Astrocyte of the cerebellum (primary cell): ENCODE measurements at regions of chr10 and their contacts with region 1.

Region 1: GRCh38 chr10:722266-723025 is 33.0 kb upstream of the DIP2C start:
- DNase-seq: no peak
- H3K4me3 ChIP-seq: no peak overlapping the region
- CTCF ChIP-seq: no peak

Region 2: GRCh38 chr10:759898-760477 is 37.5 kb after region 1 on chr10:
- in situ Hi-C with region 1: loop called (anchors 5 kb)
- DNase-seq: no peak
- H3K4me3 ChIP-seq: no peak overlapping the region
- CTCF ChIP-seq: no peak